Activated CD4-positive, alpha-beta memory T cell treated with anti-CD3 and anti-CD28 coated beads, Interleukin-2, amount 10 ng/mL, durations not matched to agents 7 days and 5 days (primary cell): ENCODE measurements at regions of chr21 and their contacts with region 1.

Region 1: DNA sequence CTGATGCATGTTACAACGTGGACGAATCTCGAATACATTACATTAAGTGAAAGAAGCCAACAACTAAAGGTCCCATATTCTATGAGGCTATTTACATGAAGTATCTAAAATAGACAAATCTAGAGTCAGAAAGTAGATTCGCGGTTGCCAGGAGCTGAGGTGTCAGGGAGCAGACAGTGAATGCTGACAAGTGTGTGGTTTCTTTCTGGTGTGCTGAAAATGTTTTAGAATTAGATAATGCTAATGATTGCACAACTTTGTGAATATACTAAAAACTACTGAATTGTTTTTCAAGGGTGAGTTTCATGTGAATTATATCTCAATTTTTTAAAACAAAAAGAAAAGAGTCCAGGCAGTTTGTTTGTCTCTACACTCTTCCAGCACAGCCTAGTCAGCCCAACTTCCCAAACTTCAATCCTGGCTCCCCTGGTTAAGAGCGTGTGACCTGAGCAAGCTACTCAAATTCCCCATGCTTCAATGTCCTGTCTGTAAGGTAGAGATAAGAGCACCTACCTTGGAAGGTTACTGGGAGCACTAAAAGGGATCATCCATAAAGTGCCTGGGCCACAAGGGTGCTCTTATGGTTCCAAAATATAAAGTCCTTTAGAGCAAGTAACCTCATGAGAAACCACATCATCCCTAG is 20.9 kb downstream of the HLCS start:
- DNase-seq: no peak
- H3K4me3 Mint-ChIP-seq: no peak overlapping the region
- H3K27ac Mint-ChIP-seq: no peak overlapping the region
- H3K4me1 Mint-ChIP-seq: no peaks in the 10 kb centered on the region
- H3K27me3 Mint-ChIP-seq: no peaks in the 10 kb centered on the region

Region 2: DNA sequence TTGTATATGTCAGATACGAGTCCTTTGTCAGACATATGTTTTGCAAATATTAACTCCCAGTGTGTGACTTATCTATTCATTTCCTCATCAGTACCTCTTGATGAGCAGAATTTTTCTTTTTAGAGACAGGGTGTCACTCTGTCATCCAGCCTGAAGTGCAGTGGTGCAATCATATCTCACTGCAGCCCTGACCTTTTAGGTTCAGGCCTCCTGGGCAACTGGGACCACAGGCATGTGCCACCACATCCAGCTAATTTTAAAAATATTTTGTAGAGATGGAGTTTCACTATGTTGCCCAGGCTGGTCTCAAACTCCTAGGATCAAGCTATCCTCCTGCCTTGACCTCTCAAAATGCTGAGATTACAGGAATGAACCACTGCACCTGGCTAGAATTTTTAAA is 72.1 kb before region 1 on chr21:
- CTCF ChIA-PET with region 1: no interaction called
- POLR2A ChIA-PET with region 1: no interaction called
- DNase-seq: no peak
- H3K4me3 Mint-ChIP-seq: no peak overlapping the region
- H3K27ac Mint-ChIP-seq: no peak overlapping the region
- H3K4me1 Mint-ChIP-seq: no peaks in the 10 kb centered on the region
- H3K27me3 Mint-ChIP-seq: no peaks in the 10 kb centered on the region

Region 3: DNA sequence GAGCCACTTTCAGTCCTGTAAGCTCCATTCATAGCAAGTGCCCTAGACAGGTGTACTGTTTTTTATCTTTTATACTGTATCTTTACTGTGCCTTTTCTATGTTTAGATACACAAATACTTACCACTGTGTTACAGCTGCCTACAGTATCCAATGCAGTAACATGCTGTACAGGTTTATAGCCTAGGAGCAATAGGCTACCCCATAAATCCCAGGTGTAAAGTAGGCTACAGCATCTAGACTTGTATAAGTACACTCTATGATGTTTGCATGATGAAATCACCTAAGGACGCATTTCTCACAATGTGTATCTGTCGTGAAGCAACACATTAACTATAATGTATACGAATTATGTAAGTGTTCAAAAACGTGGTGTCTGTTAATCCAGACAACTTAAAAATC is 10.2 kb after region 1 on chr21:
- CTCF ChIA-PET with region 1: interaction called, 10 read pairs
- POLR2A ChIA-PET with region 1: interaction called, 3 read pairs
- DNase-seq: no peak
- H3K4me3 Mint-ChIP-seq: no peak overlapping the region
- H3K27ac Mint-ChIP-seq: no peak overlapping the region
- H3K4me1 Mint-ChIP-seq: peaks cover 2% of the 10 kb centered on the region
- H3K27me3 Mint-ChIP-seq: no peaks in the 10 kb centered on the region

Region 4: DNA sequence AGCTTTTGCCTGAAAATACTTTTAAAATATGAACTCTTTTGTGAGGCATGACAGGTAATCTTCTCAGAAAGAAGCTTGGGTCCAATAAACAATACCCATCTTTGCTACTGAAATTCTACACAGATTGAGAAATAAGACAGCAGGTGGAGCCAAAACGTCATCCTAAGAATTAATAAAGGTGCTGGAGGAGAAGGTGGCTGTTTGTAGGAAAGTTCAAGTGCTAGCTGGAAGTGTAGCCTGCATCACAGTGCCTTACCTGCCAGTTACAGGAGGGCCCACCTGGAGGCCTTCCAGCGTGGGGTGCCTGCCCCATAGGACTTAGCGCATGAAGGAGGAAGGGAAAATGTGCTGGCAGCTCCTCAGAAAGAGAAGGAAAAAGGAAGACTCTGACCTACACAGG is 221.1 kb after region 1 on chr21:
- CTCF ChIA-PET with region 1: no interaction called
- POLR2A ChIA-PET with region 1: no interaction called
- DNase-seq: no peak
- H3K4me3 Mint-ChIP-seq: no peak overlapping the region
- H3K27ac Mint-ChIP-seq: no peak overlapping the region
- H3K4me1 Mint-ChIP-seq: no peaks in the 10 kb centered on the region
- H3K27me3 Mint-ChIP-seq: no peaks in the 10 kb centered on the region